ENCODE measurements at regions of chr10 and their contacts with region 1.

Region 1: DNA sequence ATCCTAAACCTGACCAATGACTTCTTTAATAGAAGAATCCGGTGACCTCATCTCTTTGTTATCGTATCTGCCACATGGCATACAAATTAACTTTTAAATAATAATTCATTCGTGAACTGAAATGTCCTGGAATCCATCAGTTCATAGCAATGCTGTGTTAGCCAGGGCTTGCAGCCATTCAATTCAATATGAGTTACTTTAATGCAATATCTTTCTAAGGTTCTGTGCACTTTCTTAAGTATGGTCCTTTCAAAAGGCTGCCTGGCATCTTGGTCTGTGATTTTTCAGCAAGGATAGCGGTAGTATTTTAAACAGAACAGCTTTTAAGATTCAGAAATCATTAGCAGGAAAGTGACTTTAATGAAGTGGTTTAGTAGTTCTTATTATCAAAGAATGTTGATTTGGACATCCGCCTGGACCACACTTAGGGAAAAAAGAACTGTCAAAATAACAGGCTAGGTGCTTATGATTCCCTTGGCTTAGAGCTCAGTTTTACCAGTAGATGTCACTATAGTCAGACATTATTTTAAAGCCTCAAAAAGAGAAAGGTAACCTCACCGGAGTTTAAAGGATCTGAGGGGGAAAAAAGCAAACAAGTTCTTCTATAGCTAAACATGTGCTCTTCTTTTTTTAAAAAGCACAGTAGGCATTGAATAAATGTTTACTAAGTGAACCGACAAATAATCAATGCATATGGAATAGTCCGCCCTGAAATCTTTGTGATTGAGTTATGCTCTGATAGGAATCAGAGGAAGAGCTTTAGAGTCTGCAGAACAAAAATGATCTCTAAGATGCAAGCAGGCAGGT is 22.7 kb downstream of the SLC35G1 start:
- DNase-seq: no peak
- H3K4me3 ChIP-seq: peak overlapping the region in 2 of 4 donors; percentile 2 to 12
- H3K27ac ChIP-seq: no peak overlapping the region
- H3K4me1 ChIP-seq: peaks cover 0 to 8% (median 0%) of the 10 kb centered on the region in 4 donors
- H3K27me3 ChIP-seq: no peaks in the 10 kb centered on the region
- CTCF ChIP-seq: peak; percentile 45 to 58 (median 52)
- EP300 ChIP-seq: no peak
- POLR2A ChIP-seq: no peak

Region 2: DNA sequence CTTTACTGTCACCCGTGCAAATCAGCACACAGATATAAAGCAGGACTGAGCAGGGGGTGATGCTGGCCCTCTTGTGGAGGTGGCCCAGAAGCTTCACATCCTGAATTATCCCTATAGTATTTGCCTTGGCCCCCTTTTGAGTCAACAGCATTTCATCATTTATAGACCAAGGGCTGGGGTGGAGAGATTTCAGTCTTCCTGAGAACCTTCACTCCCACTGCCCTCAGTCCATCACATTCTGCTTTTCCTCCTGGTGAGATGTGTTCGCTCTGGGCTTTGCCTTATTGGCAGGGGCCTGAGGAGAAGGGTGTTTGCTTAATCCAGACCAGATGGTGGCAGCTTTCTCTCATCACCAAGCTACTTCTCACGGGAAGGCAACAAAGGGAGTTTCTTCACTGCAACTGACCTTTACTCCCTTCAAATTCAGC is 398.6 kb after region 1 on chr10:
- in situ Hi-C with region 1: loop called in 3 of 4 experiments (anchors 10 to 25 kb)
- intact Hi-C with region 1: loop called (anchors 2 kb)
- DNase-seq: no peak
- H3K4me3 ChIP-seq: no peak overlapping the region
- H3K27ac ChIP-seq: peak overlapping the region in 1 of 4 donors; percentile 5
- H3K4me1 ChIP-seq: peaks cover 0 to 5% (median 2%) of the 10 kb centered on the region in 4 donors
- H3K27me3 ChIP-seq: no peaks in the 10 kb centered on the region
- CTCF ChIP-seq: no peak
- EP300 ChIP-seq: no peak
- POLR2A ChIP-seq: no peak

Region 3: DNA sequence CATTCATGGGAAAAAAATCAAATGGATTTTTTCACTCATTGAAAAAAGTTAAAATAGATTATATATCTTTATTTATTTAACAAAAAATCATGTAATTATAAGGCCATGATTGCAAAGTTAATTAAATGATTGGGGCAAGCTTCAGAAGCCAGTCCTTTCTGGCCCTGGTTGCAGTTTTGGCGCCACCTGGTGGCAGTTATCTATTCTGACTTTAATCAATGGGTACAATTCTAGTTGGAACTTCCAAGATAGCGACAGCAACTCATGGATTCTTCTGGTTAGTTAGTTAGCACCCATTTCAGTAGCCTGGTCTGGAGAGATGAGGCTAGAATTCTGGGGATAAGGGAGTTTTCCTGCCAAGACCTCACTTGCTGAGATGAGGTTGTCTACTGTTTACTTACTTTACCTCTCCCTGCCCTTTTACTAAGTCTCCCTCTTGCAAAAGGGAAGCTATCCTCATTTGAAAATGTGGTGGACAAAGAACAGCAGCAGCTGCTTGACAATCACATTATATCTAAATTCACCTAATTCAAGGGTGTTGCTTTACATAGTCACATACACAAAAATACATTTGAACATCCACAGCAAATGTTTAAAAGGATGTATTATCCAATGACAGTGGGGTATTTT is 403.9 kb after region 1 on chr10:
- in situ Hi-C with region 1: loop called in 3 of 4 experiments (anchors 10 to 25 kb)
- intact Hi-C with region 1: loop called (anchors 2 kb)
- DNase-seq: peak; percentile 65
- H3K4me3 ChIP-seq: no peak overlapping the region
- H3K27ac ChIP-seq: no peak overlapping the region
- H3K4me1 ChIP-seq: peaks cover 0 to 4% (median under 1%) of the 10 kb centered on the region in 4 donors
- H3K27me3 ChIP-seq: no peaks in the 10 kb centered on the region
- CTCF ChIP-seq: peak; percentile 76 to 92 (median 82)
- EP300 ChIP-seq: no peak
- POLR2A ChIP-seq: no peak

Measured in transverse colon (tissue), 4 donors.